ENCODE measurements at regions of chr7 and their contacts with region 1.

Region 1: GRCh38 chr7:149090397-149091195 is at the start of gene ZNF786:
- DNase-seq: peak; percentile 92
- ATAC-seq: peak; percentile 97
- total RNA-seq, gene ZNF786: 2.9 to 3.0 TPM

Region 2: GRCh38 chr7:148782757-148783456 is 307.7 kb before region 1 on chr7:
- intact Hi-C with region 1: no loop called
- DNase-seq: no peak
- ATAC-seq: no peak

Region 3: DNA sequence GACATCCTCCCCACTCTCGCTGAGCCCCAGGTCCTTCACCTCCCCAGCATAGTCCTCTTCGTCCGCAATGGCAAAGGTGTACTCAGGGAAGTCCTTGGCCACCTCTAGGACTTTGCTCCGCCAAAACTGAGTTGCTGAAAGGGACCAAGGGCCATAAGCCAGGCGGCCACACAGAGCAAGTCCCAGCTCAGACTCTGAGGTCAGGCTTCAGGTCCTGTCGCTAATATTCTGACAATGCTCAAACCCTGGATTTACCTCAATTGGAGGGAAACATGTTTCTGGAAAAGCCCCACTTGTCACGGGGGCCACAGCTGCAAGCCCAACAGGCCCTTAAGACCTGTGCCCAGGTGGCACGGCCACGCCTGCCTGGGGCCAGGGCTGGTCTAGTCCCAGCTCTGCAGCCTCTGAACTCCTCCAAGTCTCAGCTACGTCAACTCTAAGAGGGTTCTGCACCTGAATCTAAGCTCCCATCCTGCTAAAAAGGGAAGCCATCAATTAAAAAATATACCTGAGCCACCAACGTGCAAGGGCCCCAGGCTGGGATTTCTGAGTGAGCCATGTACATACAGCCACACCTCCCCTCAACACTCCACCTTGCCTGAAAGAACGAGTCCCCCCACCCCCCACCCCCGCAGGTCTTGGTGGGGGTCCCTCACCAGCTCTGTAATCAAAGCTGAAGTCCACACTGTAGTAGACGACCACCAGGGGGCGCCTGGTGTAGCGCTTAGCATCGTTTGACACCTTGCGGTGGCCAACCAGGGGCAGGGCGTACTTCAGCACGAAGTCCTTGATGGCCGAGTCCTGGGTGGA is 85.2 kb before region 1 on chr7:
- intact Hi-C with region 1: loop called in 1 of 2 experiments (anchors 1 kb)
- DNase-seq: peak; percentile 93
- ATAC-seq: peak; percentile 81 to 91

Region 4: GRCh38 chr7:149125863-149126661 is 35.5 kb after region 1 on chr7 and contains the start of gene ZNF425:
- intact Hi-C with region 1: loop called in 1 of 2 experiments (anchors 1 kb)
- DNase-seq: peak; percentile 94
- ATAC-seq: peak; percentile 94
- total RNA-seq, gene ZNF425: 0.79 to 1.0 TPM

Region 5: DNA sequence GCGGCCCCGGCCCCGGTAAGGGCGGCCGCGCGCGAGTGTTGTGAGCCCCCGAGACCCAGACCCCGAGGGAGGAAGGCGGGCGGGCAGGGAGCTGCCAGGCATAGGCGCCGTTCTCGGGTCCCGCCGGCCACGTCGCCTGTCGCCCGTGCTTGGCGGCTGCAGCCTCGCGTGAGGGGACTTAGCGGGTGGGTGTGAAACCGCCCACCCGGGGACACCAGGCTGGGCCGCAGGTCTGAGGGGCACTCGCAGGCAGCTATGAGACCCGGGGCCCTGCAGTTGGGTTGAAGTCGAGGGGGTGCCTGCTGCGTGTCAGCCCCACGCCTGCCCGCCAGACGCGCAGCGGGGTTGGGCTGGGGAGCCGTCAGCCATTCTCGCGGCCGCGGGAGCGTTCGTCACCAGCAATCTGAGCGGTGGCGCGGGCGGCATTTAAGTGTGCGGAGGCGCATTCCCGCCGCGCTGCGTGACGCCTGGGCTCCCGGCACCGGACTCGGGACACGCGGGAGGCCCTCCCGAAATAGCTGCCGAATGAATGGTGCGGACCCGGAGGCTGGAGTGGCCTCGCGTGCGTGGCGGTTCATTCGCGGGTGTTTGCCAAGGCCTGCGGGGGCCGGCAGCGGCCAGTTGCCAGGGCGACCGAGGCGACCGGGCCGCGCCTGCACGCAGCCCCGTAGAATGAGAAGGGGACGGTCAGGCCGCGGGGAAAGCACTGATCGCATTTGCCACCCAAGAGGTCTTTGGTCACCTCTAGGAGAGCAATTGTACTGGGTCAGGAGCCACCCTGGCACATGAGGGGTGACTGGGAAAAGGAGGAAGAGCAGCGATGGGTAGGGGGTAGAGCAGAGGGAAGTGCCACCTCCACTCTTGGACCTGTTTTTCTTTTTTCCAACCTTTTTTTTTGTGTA is 57.4 kb after region 1 on chr7:
- intact Hi-C with region 1: no loop called
- DNase-seq: peak; percentile 67
- ATAC-seq: peak; percentile 64 to 73

Measured in left cardiac atrium (tissue), 4 donors.